A549 (cell line): ENCODE measurements at regions of chr19 and their contacts with region 1.

Region 1: DNA sequence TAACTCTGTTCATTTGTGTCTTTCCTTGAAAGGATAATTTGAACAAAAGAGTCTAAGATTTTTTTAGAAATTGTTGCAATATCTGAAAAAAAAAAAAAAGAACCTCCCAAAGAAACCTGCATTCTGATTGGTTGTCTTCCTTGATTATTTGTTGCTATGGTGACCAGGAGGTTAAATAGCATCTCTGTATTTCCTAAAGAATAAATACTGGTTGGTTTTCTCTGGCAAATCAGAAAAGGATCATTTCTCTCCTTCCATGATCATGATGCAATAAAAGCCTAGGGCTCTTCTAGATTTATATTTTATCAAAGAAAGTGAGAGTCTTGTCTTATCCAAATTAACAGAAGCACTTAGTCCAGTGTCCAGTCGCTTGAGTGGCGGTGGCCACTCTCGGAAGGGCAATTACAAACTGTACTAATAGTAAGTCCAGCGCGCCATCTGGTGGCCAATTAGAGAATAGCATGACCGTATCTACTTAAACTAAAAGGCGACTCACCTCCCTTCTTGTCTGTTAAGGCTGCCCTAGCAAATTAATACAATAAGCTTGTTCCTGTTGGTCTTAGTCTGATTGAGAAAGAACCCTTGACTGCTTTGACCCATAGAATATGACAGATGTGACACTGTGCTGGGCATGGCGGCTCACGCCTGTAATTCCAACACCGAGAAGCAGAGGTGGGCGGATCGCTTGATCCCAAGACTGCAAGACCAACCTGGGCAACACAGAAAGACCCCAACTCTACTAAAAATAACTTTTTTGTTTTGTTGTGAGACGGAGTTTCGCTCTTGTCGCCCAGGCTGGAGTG is 47.0 kb upstream of the PNMA8B start:
- DNase-seq: peak; percentile 69 to 94
- ATAC-seq: peak; percentile 90 to 92
- H3K4me3 ChIP-seq: no peak overlapping the region
- H3K27ac ChIP-seq: no peak overlapping the region
- H3K4me1 ChIP-seq: no peaks in the 10 kb centered on the region
- CTCF ChIP-seq: peak; percentile 98
- EP300 ChIP-seq: no peak
- POLR2A ChIP-seq: no peak
- RAD21 ChIP-seq: peak; percentile 91 to 93

Region 2: DNA sequence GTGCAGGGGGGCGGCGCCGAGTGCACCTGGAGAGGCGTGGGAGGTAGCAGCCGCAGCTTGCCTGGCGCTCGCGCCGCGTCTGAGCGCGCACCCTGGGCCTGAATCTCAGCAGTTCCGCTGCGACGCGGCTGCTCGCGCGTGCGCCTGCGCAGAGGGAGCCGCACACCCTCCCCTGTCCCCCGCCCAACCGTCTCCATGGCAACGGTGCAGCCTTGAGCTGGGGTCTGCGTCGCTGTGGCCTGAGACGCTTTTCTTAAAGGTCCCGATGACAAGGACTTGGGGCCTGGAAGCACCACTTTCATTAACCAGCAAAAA is 46.9 kb before region 1 on chr19 and contains the start of gene PNMA8B:
- CTCF ChIA-PET with region 1: interaction called, 1,052 read pairs
- POLR2A ChIA-PET with region 1: no interaction called
- DNase-seq: no peak
- ATAC-seq: no peak
- H3K4me3 ChIP-seq: no peak within 1 kb of the TSS
- H3K27ac ChIP-seq: no peak within 1 kb of the TSS
- H3K4me1 ChIP-seq: peaks cover 5% of the 10 kb centered on the region; the same call in 1 of the 3 replicates
- CTCF ChIP-seq: no peak
- EP300 ChIP-seq: no peak
- POLR2A ChIP-seq: no peak
- RAD21 ChIP-seq: no peak
- polyA plus RNA-seq, gene PNMA8B: not detected in 2 replicates

Region 3: GRCh38 chr19:46529622-46530462 is 12.8 kb before region 1 on chr19:
- CTCF ChIA-PET with region 1: interaction called, 1,052 read pairs
- POLR2A ChIA-PET with region 1: no interaction called
- DNase-seq: peak; percentile 69 to 89
- ATAC-seq: peak; percentile 63 to 84; a peak in 5 of 6 replicates
- H3K4me3 ChIP-seq: no peak overlapping the region
- H3K27ac ChIP-seq: peak overlapping the region in 1 of 2 experiments; percentile 36; a peak in 2 of 6 replicates
- H3K4me1 ChIP-seq: peaks cover 10% of the 10 kb centered on the region; the same call in 1 of the 3 replicates
- CTCF ChIP-seq: peak; percentile 100
- EP300 ChIP-seq: no peak
- POLR2A ChIP-seq: no peak
- RAD21 ChIP-seq: peak; percentile 96 to 97

Region 4: DNA sequence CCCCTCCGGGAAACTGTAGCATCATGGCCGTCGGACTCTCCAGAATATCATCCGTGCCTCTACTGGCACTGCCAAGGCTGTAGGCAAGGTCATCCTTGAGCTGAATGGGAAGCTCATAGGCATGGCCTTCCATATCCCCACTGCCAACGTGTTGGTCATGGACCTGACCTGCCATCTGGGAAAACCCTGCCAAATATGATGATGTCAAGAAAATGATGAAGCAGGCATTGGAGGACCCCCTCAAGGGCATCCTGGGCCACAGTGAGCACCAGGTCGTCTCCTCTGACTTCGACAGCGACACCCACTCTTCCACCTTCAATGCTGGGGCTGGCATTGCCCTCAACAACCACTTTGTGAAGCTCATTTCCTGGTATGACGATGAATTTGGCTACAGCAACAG is 16.6 kb after region 1 on chr19:
- CTCF ChIA-PET with region 1: interaction called, 21 read pairs
- POLR2A ChIA-PET with region 1: no interaction called
- DNase-seq: no peak
- ATAC-seq: no peak
- H3K4me3 ChIP-seq: no peak overlapping the region
- H3K27ac ChIP-seq: no peak overlapping the region
- H3K4me1 ChIP-seq: no peaks in the 10 kb centered on the region
- CTCF ChIP-seq: no peak
- EP300 ChIP-seq: no peak
- POLR2A ChIP-seq: no peak
- RAD21 ChIP-seq: no peak